Activated CD4-positive, alpha-beta memory T cell treated with anti-CD3 and anti-CD28 coated beads, Interleukin-2, amount 10 ng/mL, durations not matched to agents 7 days and 5 days (primary cell): ENCODE measurements at regions of chr15 and their contacts with region 1.

Region 1: GRCh38 chr15:67839929-67840748 is at the start of gene RNU6-1:
- DNase-seq: peak; percentile 96
- H3K4me3 Mint-ChIP-seq: peak within 1 kb of the TSS; percentile 85
- H3K27ac Mint-ChIP-seq: peak within 1 kb of the TSS; percentile 90
- H3K4me1 Mint-ChIP-seq: peaks cover 39% of the 10 kb centered on the region
- H3K27me3 Mint-ChIP-seq: peaks cover 29% of the 10 kb centered on the region
- total RNA-seq, gene RNU6-1: not detected

Region 2: GRCh38 chr15:67456677-67457529 is 383.2 kb before region 1 on chr15:
- CTCF ChIA-PET with region 1: interaction called, 52 read pairs
- POLR2A ChIA-PET with region 1: interaction called, 4 read pairs
- DNase-seq: peak; percentile 82
- H3K4me3 Mint-ChIP-seq: no peak overlapping the region
- H3K27ac Mint-ChIP-seq: no peak overlapping the region
- H3K4me1 Mint-ChIP-seq: no peaks in the 10 kb centered on the region
- H3K27me3 Mint-ChIP-seq: peaks cover 11% of the 10 kb centered on the region

Region 3: DNA sequence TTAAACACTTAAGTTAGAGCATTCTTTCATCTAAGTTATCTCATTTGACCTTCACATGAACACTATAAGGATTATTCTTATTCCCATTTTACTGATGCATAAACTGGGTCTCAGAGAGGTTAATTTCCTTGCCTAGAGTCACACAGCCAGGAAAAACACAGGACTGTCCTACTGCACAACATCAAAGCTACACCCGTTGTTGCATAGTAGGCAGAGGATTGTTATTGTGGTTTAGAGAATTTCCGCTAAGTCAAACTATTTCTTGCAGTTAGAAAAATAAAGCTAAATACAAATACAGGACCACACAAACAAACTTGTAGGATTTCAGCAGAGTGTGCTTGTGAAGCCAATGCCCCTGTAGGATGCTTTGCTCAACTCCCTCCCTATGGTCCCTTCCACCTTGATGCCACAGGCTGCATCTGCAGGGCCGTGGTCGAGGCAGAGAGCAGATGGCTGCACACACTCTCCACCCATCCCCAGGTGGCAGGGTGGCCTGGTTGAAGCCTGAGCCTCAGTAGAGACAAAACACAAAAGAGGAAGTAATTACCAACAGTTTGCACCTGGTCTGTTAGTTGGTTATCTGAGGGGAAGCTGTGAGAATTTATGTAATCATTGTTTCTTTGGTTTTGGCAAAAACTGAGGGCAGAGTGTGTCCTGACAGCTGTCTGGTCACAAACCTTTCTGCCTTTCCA is 55.9 kb before region 1 on chr15:
- CTCF ChIA-PET with region 1: interaction called, 17 read pairs
- POLR2A ChIA-PET with region 1: no interaction called
- DNase-seq: no peak
- H3K4me3 Mint-ChIP-seq: no peak overlapping the region
- H3K27ac Mint-ChIP-seq: peak overlapping the region; percentile 49
- H3K4me1 Mint-ChIP-seq: peaks cover 22% of the 10 kb centered on the region
- H3K27me3 Mint-ChIP-seq: no peaks in the 10 kb centered on the region

Region 4: GRCh38 chr15:67813104-67813634 is 27.0 kb before region 1 on chr15:
- CTCF ChIA-PET with region 1: no interaction called
- POLR2A ChIA-PET with region 1: no interaction called
- DNase-seq: no peak
- H3K4me3 Mint-ChIP-seq: no peak overlapping the region
- H3K27ac Mint-ChIP-seq: no peak overlapping the region
- H3K4me1 Mint-ChIP-seq: peaks cover 2% of the 10 kb centered on the region
- H3K27me3 Mint-ChIP-seq: peaks cover 21% of the 10 kb centered on the region

Region 5: GRCh38 chr15:67824976-67825879 is 14.9 kb before region 1 on chr15 and contains the start of gene SKOR1:
- CTCF ChIA-PET with region 1: interaction called, 11 read pairs
- POLR2A ChIA-PET with region 1: interaction called, 3 read pairs
- DNase-seq: no peak
- H3K4me3 Mint-ChIP-seq: peak within 1 kb of the TSS; percentile 44
- H3K27ac Mint-ChIP-seq: peak within 1 kb of the TSS; percentile 59
- H3K4me1 Mint-ChIP-seq: peaks cover 26% of the 10 kb centered on the region
- H3K27me3 Mint-ChIP-seq: peaks cover 75% of the 10 kb centered on the region
- total RNA-seq, gene SKOR1: 0.23 to 0.25 TPM

Region 6: GRCh38 chr15:68053701-68054627 is 213.8 kb after region 1 on chr15 and contains the start of gene PIAS1:
- CTCF ChIA-PET with region 1: no interaction called
- POLR2A ChIA-PET with region 1: interaction called, 17 read pairs
- DNase-seq: peak; percentile 95
- H3K4me3 Mint-ChIP-seq: peak within 1 kb of the TSS; percentile 93
- H3K27ac Mint-ChIP-seq: peak within 1 kb of the TSS; percentile 85
- H3K4me1 Mint-ChIP-seq: peaks cover 51% of the 10 kb centered on the region
- H3K27me3 Mint-ChIP-seq: peaks cover 8% of the 10 kb centered on the region
- total RNA-seq, gene PIAS1: 39.1 to 43.4 TPM